ENCODE measurements at regions of chr11 and their contacts with region 1.

Region 1: DNA sequence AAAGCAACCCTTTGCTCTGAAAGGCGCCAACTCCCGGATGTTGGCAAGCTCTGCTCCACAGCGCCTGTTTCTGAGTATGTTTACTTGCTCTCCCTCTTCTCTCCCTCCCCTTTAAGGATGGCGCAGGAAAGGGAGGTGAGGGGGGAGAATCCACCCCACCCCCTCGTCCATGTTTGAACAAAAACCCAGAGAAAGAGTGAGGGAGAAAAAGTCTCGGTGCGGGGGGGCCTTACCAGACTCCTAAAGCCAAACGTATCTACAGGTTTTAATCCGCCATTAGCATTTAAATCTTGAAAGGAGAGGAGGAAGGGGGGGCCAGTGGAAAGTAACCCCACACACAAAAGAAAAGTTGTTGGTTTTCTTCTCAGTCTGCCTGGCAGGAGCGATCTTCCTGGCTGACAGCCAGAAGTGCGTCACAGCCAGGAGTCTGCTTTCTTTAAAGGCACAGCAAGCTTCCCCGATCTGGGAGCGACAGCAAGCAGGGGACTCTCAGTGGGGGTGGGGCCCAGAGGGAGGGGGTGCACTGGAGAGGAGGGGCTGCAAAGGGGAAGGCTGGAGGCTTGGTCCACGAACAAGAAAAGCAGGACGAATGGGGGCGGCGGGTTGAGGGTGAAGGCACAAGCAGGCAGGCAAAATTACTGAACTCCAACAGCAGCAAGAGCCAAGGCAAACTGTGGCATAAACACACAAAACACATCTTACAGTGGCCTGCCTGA is 39.5 kb downstream of the NUMA1 start:
- DNase-seq: peak in 1 of 2 donors; percentile 98
- H3K4me3 ChIP-seq: peak overlapping the region; percentile 65 to 68
- H3K27ac ChIP-seq: peak overlapping the region; percentile 96
- H3K4me1 ChIP-seq: peaks cover 59% of the 10 kb centered on the region
- H3K27me3 ChIP-seq: no peaks in the 10 kb centered on the region
- CTCF ChIP-seq: no peak
- POLR2A ChIP-seq: peak in 1 of 2 donors; percentile 38

Region 2: GRCh38 chr11:72080256-72080974 is 39.5 kb after region 1 on chr11 and contains the starts of genes LRRC51 and NUMA1:
- intact Hi-C with region 1: loop called (anchors 2 kb)
- DNase-seq: peak; percentile 100
- H3K4me3 ChIP-seq: peak within 1 kb of the TSS; percentile 68 to 75
- H3K27ac ChIP-seq: peak within 1 kb of the TSS; percentile 91
- H3K4me1 ChIP-seq: peaks cover 30% of the 10 kb centered on the region
- H3K27me3 ChIP-seq: no peaks in the 10 kb centered on the region
- CTCF ChIP-seq: no peak
- POLR2A ChIP-seq: peak in 1 of 2 donors; percentile 61
- total RNA-seq, gene LRRC51: 5.6 TPM
- total RNA-seq, gene NUMA1: 314 TPM

Region 3: GRCh38 chr11:72209101-72209500 is 168.2 kb after region 1 on chr11:
- intact Hi-C with region 1: no loop called
- DNase-seq: peak in 1 of 2 donors; percentile 7
- H3K4me3 ChIP-seq: no peak overlapping the region
- H3K27ac ChIP-seq: no peak overlapping the region
- H3K4me1 ChIP-seq: no peaks in the 10 kb centered on the region
- H3K27me3 ChIP-seq: no peaks in the 10 kb centered on the region
- CTCF ChIP-seq: no peak
- POLR2A ChIP-seq: no peak

Measured in vagina (tissue), 2 donors.